ENCODE measurements at regions of chr10 and their contacts with region 1.

Region 1: GRCh38 chr10:99560277-99561126 is 27.8 kb downstream of the NKX2-3 start:
- H3K4me3 ChIP-seq: no peak overlapping the region
- H3K27ac ChIP-seq: no peak overlapping the region
- H3K4me1 ChIP-seq: peaks cover 5% of the 10 kb centered on the region
- CTCF ChIP-seq: peak; percentile 56

Region 2: DNA sequence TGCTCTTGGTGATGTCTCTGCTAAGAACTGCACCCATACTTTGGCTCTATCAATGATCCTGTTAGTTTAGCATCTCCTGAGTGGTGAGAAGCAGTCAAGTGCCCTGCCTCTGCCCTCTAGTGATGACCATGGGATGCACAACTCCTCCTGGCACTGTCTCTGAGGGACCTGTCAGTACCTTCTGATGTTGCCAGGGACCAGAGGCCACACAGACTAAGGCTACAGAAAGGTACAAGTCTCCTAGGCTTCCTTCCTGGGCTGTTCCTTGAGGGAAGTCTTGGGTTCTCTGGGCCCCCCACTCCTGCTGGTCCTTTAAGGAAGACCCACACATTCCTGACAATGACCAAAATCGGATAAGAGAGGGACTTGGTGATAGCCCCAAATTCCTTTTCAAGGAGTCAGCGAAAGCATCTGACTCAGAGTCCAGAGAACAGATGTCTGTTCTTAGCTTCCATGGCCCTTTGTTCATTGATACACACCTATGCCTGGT is 12.4 kb before region 1 on chr10:
- CTCF ChIA-PET with region 1: interaction called, 21 read pairs
- POLR2A ChIA-PET with region 1: no interaction called
- H3K4me3 ChIP-seq: no peak overlapping the region
- H3K27ac ChIP-seq: no peak overlapping the region
- H3K4me1 ChIP-seq: peaks cover 14% of the 10 kb centered on the region
- CTCF ChIP-seq: peak; percentile 62; the same call in 1 of the 2 replicates

Region 3: DNA sequence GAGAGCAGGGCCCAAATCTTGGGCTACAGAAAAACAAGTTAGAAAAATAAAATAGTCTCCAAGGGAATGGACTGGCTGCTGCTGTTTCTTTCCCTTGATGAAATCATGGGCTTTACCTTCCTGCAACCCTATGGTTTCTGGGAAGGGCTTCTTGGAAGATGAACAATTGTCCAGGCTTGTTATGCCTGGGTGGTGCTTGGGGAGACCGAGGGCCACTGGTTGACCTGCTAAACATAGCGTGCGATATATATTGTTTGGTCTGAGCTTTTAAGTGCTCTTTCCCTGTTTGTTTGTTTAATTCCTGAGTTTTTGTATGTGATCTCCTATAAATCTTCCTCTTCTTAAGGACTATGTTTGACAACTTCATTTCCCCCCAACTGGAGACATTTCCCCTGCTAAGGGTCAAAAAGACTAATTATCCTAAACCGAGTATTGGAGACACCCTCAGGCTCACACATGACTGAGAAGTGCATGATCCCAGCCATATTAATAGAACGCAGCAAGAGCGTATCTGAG is 21.8 kb after region 1 on chr10:
- CTCF ChIA-PET with region 1: interaction called, 11 read pairs
- POLR2A ChIA-PET with region 1: no interaction called
- H3K4me3 ChIP-seq: no peak overlapping the region
- H3K27ac ChIP-seq: no peak overlapping the region
- H3K4me1 ChIP-seq: no peaks in the 10 kb centered on the region
- CTCF ChIP-seq: no peak

Region 4: DNA sequence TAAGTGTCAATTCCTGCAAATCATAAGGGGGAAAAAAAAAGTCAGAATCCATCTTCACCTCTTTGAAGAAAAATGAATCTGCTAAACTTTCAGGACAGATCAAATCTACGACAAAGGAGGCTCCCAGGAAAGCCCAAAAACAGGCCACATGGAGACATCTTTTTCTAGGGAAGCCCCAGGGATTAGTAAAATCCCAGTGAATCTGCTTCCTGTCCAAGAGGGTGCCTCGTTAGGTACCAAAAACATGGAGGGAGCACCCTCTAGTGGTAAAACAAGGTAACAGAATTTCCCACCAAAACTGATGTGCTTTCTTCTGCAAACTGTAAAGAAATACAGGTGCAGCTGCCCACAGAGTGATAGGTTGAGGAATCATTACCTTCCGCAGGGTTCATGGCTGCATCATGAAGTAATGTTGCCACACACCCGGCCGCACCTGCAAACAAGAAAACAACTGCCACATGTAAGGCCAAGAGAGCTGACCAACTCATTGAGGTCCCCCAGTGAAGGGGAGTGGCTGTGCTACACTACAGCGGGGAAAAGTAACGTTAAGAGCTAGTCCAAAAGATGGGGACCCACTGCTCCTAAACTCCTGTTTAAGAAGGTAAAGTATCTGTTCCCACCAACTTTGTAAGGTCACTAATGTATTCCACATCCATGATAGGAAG is 51.8 kb after region 1 on chr10:
- CTCF ChIA-PET with region 1: interaction called, 98 read pairs
- POLR2A ChIA-PET with region 1: no interaction called
- H3K4me3 ChIP-seq: no peak overlapping the region
- H3K27ac ChIP-seq: no peak overlapping the region
- H3K4me1 ChIP-seq: 0 out of 2 replicates have a peak, but pooled peaks cover 3% of the 10 kb centered on the region
- CTCF ChIP-seq: peak; percentile 78

Region 5: GRCh38 chr10:99711129-99711719 is 150.7 kb after region 1 on chr10:
- CTCF ChIA-PET with region 1: interaction called, 14 read pairs
- POLR2A ChIA-PET with region 1: no interaction called
- H3K4me3 ChIP-seq: no peak overlapping the region
- H3K27ac ChIP-seq: no peak overlapping the region
- H3K4me1 ChIP-seq: no peaks in the 10 kb centered on the region
- CTCF ChIP-seq: no peak

Measured in HEK293 (cell line).